ENCODE measurements at regions of chr1 and their contacts with region 1.

Region 1: DNA sequence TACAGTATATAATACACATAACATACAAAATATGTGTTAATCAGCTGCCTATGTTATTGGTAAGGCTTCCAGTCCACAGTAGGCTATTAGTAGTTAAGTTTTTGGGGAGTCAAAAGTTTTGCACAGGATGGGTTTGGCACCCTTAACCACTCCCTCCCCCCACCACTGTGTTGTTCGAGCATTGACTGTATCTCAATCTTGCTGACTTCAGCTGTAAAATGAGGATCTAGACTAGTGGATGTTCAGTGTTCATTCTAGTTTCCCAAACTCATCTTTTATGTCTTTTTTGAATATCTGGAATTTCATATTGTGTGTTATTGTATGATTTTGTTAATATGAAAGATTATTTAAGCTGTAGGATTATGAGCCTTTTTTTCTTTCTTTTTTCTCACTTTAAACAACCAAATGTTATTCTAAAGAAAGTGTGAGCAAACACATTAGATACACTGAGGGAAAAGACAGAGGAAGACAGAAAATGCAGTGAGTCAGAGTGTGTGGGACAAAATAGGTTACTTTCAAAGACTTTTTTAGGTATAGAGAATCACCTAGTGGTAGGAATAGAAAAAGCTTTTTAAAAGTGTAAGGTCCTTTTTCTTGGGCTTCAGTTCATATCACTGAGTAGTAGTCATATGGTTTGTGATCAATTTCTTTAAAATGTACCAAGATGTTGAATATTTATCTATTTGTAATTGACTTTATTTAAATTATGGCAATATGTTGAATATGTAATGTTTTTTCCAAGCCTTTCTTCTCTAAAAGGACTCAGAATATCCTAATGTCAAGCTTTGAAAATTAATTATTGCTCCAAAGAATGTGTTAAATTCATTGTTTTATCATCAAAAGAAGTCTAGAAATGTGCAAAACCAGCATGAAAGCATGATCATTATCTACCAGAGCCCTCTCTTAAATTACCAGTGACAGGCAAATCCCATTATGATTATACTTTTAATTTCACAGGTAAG is 17.9 kb upstream of the CENPF start:
- DNase-seq: peak; percentile 85
- H3K4me3 Mint-ChIP-seq: no peak overlapping the region
- H3K27ac Mint-ChIP-seq: peak overlapping the region; percentile 49
- H3K4me1 Mint-ChIP-seq: peaks cover 38% of the 10 kb centered on the region
- H3K27me3 Mint-ChIP-seq: no peaks in the 10 kb centered on the region
- CTCF ChIP-seq: peak; percentile 98

Region 2: GRCh38 chr1:214213136-214213535 is 371.9 kb before region 1 on chr1:
- CTCF ChIA-PET with region 1: interaction called, 50 read pairs
- POLR2A ChIA-PET with region 1: interaction called, 3 read pairs
- intact Hi-C with region 1: loop called (anchors 1 kb)
- DNase-seq: peak; percentile 82
- H3K4me3 Mint-ChIP-seq: peak overlapping the region; percentile 15
- H3K27ac Mint-ChIP-seq: peak overlapping the region; percentile 7
- H3K4me1 Mint-ChIP-seq: peaks cover 20% of the 10 kb centered on the region
- H3K27me3 Mint-ChIP-seq: no peaks in the 10 kb centered on the region
- CTCF ChIP-seq: peak; percentile 25

Region 3: GRCh38 chr1:214362188-214362882 is 222.8 kb before region 1 on chr1:
- CTCF ChIA-PET with region 1: interaction called, 14 read pairs
- POLR2A ChIA-PET with region 1: interaction called, 6 read pairs
- intact Hi-C with region 1: no loop called
- DNase-seq: no peak
- H3K4me3 Mint-ChIP-seq: no peak overlapping the region
- H3K27ac Mint-ChIP-seq: peak overlapping the region; percentile 50
- H3K4me1 Mint-ChIP-seq: peaks cover 6% of the 10 kb centered on the region
- H3K27me3 Mint-ChIP-seq: no peaks in the 10 kb centered on the region
- CTCF ChIP-seq: no peak

Region 4: GRCh38 chr1:214404154-214404553 is 180.9 kb before region 1 on chr1:
- CTCF ChIA-PET with region 1: interaction called, 31 read pairs
- POLR2A ChIA-PET with region 1: interaction called, 6 read pairs
- intact Hi-C with region 1: no loop called
- DNase-seq: peak; percentile 40
- H3K4me3 Mint-ChIP-seq: no peak overlapping the region
- H3K27ac Mint-ChIP-seq: peak overlapping the region; percentile 20
- H3K4me1 Mint-ChIP-seq: peaks cover 24% of the 10 kb centered on the region
- H3K27me3 Mint-ChIP-seq: no peaks in the 10 kb centered on the region
- CTCF ChIP-seq: no peak

Region 5: DNA sequence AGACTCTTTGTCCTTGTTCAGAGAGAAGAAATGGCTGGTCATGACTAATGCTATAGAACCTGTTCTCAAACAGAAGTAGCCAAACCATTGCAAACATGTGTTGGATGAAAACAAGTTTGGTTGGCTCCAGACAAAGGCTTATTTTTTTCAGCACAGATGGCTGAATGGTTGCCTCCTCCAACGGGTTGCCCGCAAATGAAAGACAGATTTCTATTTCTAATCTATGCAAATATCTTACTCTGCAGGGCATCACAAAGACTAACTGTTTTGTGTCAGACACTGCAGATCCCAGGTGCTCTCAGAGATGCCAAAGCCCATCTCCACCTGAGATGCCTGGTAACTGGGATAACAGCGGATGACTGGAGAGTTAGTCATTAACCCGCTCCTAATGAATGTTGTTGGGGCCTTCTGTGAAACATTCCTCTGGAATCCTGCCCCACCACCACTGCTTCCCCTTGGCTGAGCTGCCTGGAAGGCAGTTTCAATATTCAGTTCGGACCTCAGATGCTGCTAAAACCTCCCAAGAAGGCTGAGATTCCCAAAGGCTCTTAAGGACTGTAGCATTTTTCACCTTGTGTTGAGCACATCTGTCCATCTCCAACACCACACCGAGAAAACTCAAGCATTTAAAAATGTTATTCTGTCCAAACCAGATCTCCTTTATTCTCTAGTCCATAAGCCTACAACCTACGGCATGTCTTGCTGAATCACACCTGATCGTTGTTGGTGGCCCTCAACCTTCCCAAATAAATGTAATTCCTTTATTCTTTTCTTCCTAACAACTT is 138.1 kb before region 1 on chr1:
- CTCF ChIA-PET with region 1: interaction called, 50 read pairs
- POLR2A ChIA-PET with region 1: interaction called, 86 read pairs
- intact Hi-C with region 1: no loop called
- DNase-seq: peak; percentile 97
- H3K4me3 Mint-ChIP-seq: peak overlapping the region; percentile 26
- H3K27ac Mint-ChIP-seq: peak overlapping the region; percentile 81
- H3K4me1 Mint-ChIP-seq: peaks cover 59% of the 10 kb centered on the region
- H3K27me3 Mint-ChIP-seq: no peaks in the 10 kb centered on the region
- CTCF ChIP-seq: no peak

Region 6: GRCh38 chr1:214542275-214543199 is 42.5 kb before region 1 on chr1:
- CTCF ChIA-PET with region 1: interaction called, 298 read pairs
- POLR2A ChIA-PET with region 1: interaction called, 2,189 read pairs
- intact Hi-C with region 1: no loop called
- DNase-seq: no peak
- H3K4me3 Mint-ChIP-seq: no peak overlapping the region
- H3K27ac Mint-ChIP-seq: peak overlapping the region; percentile 32
- H3K4me1 Mint-ChIP-seq: peaks cover 87% of the 10 kb centered on the region
- H3K27me3 Mint-ChIP-seq: no peaks in the 10 kb centered on the region
- CTCF ChIP-seq: no peak

Region 7: GRCh38 chr1:214623430-214623829 is 38.3 kb after region 1 on chr1:
- CTCF ChIA-PET with region 1: interaction called, 49 read pairs
- POLR2A ChIA-PET with region 1: interaction called, 4 read pairs
- intact Hi-C with region 1: no loop called
- DNase-seq: peak; percentile 42
- H3K4me3 Mint-ChIP-seq: no peak overlapping the region
- H3K27ac Mint-ChIP-seq: peak overlapping the region; percentile 36
- H3K4me1 Mint-ChIP-seq: peaks cover 11% of the 10 kb centered on the region
- H3K27me3 Mint-ChIP-seq: no peaks in the 10 kb centered on the region
- CTCF ChIP-seq: no peak

Region 8: DNA sequence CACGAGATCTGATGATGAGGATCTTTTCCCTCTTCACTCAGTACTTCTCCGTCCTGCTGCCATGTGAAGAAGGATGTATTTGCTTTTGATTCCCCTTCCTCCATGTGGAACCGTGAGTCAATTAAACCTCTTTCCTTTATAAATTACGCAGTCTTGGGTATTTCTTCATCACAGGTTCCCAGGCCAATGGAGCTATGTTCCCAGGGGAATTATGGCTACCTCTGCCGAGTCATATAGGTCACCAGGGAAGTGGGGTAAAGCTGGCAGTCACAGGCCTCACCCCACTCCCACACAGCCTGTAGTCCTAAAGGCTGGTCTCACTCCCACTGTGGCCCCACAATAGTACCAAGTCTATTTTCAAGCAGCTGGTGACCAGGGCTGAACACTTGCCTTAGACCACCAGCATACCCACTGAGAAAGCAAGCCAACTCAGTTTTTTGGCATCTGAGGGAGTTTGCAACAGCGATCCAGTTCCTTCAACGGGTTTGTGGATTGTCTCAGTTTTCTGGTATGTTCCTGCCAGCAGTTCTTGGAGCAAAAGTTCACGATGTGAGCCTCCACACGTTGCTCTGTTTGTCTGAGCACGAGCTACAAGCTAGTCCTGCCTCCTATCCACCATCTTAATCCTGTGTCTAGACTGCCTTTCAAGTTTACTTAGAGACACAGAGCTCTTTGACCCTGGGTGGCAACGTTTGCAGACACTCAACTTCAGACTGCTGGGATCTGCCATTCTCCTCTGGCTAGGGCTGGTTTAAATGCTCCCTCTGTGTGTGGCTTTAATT is 122.4 kb after region 1 on chr1:
- CTCF ChIA-PET with region 1: no interaction called
- POLR2A ChIA-PET with region 1: no interaction called
- intact Hi-C with region 1: no loop called
- DNase-seq: no peak
- H3K4me3 Mint-ChIP-seq: no peak overlapping the region
- H3K27ac Mint-ChIP-seq: no peak overlapping the region
- H3K4me1 Mint-ChIP-seq: no peaks in the 10 kb centered on the region
- H3K27me3 Mint-ChIP-seq: peaks cover 8% of the 10 kb centered on the region
- CTCF ChIP-seq: no peak